ENCODE measurements at regions of chr1 and their contacts with region 1.

Region 1: GRCh38 chr1:235067263-235068172 is 61.1 kb downstream of the TOMM20 start:
- DNase-seq: peak; percentile 94
- H3K4me3 ChIP-seq: no peak overlapping the region
- H3K27ac ChIP-seq: peak overlapping the region; percentile 25 to 58 (median 48)
- H3K4me1 ChIP-seq: peaks cover 30 to 43% (median 34%) of the 10 kb centered on the region in 4 donors
- H3K27me3 ChIP-seq: no peaks in the 10 kb centered on the region
- CTCF ChIP-seq: no peak
- EP300 ChIP-seq: peak; percentile 10
- POLR2A ChIP-seq: no peak

Region 2: DNA sequence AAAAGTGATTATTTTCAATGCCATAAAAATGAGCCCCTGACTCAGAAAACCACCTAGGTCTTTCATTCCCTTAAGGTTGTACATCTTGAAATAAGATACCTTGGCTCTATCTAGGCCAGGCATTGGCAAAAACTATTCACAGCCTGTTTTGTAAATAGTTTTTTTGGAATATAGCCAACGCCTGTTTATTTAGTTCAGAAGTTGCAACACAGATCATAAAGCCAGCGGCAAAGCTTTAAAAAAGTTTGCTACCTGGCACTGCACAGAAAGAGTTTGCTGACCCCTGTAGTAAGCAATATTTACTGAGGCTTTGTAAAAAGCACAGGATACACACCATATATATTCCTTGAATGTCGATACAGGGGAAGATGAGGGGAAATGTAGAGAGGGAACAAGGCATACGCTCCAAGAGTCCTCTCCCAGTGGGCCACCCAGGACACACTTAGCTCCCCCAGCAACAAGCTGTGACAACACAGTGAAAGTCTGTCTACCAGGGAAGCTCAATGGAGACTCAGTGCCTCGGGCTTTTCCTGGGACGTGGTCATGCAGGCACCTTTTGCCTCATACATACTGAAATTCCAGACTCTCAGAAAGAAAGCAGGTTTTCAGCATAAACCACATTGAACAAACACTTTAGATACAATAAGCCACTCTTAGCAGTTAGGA is 609.0 kb before region 1 on chr1:
- intact Hi-C with region 1: no loop called
- DNase-seq: no peak
- H3K4me3 ChIP-seq: no peak overlapping the region
- H3K27ac ChIP-seq: no peak overlapping the region
- H3K4me1 ChIP-seq: no peaks in the 10 kb centered on the region
- H3K27me3 ChIP-seq: no peaks in the 10 kb centered on the region
- CTCF ChIP-seq: no peak
- EP300 ChIP-seq: no peak
- POLR2A ChIP-seq: no peak

Region 3: GRCh38 chr1:234944439-234945344 is 122.8 kb before region 1 on chr1:
- intact Hi-C with region 1: no loop called
- DNase-seq: no peak
- H3K4me3 ChIP-seq: no peak overlapping the region
- H3K27ac ChIP-seq: no peak overlapping the region
- H3K4me1 ChIP-seq: peaks cover 0 to 11% (median 0%) of the 10 kb centered on the region in 4 donors
- H3K27me3 ChIP-seq: no peaks in the 10 kb centered on the region
- CTCF ChIP-seq: no peak
- EP300 ChIP-seq: no peak
- POLR2A ChIP-seq: no peak

Region 4: GRCh38 chr1:235011599-235012435 is 55.7 kb before region 1 on chr1:
- intact Hi-C with region 1: loop called (anchors 5 kb)
- DNase-seq: no peak
- H3K4me3 ChIP-seq: no peak overlapping the region
- H3K27ac ChIP-seq: peak overlapping the region in 2 of 4 donors; percentile 1 to 48
- H3K4me1 ChIP-seq: peaks cover 0 to 16% (median 7%) of the 10 kb centered on the region in 4 donors
- H3K27me3 ChIP-seq: no peaks in the 10 kb centered on the region
- CTCF ChIP-seq: no peak
- EP300 ChIP-seq: no peak
- POLR2A ChIP-seq: no peak

Measured in esophagus muscularis mucosa (tissue), 4 donors.